ENCODE measurements at regions of chr21 and their contacts with region 1.

Region 1: DNA sequence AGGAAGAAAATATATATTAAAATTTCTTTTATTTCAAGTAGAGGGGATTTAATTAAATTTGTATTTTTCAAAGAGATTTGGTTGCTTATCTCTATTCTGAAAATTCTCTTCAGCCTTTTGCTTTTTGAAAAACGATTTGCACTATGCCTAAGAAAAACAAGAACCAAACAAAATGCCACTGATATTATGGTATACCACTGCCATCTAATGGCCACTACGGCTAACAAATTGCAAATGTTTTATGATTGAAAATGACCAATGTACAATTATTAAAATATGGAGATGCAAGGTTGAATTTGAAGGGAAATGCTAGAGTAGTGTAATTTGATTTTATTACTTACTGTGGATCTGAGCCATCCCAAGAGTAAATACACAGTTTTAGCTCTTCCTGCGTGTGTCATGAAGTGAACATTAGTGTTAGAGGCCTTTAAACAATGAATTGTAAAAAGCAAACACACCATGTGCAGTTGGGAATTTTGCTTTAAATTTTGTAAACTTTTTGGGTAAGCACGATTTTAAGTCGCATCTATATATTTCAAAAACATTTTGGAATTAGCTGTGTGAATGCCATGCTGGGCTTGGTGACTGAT is 137.4 kb upstream of the USP25 start:
- DNase-seq: peak; percentile 5
- H3K4me3 Mint-ChIP-seq: no peak overlapping the region
- H3K27ac Mint-ChIP-seq: no peak overlapping the region
- H3K4me1 Mint-ChIP-seq: no peaks in the 10 kb centered on the region
- H3K27me3 Mint-ChIP-seq: no peaks in the 10 kb centered on the region

Region 2: GRCh38 chr21:14259747-14260146 is 1332.6 kb before region 1 on chr21:
- CTCF ChIA-PET with region 1: no interaction called
- intact Hi-C with region 1: loop called (anchors 5 kb)
- DNase-seq: no peak
- H3K4me3 Mint-ChIP-seq: no peak overlapping the region
- H3K27ac Mint-ChIP-seq: no peak overlapping the region
- H3K4me1 Mint-ChIP-seq: peaks cover 8% of the 10 kb centered on the region
- H3K27me3 Mint-ChIP-seq: no peaks in the 10 kb centered on the region

Region 3: GRCh38 chr21:14403681-14404318 is 1188.6 kb before region 1 on chr21:
- CTCF ChIA-PET with region 1: no interaction called
- intact Hi-C with region 1: loop called (anchors 2 kb)
- DNase-seq: peak; percentile 9
- H3K4me3 Mint-ChIP-seq: no peak overlapping the region
- H3K27ac Mint-ChIP-seq: no peak overlapping the region
- H3K4me1 Mint-ChIP-seq: no peaks in the 10 kb centered on the region
- H3K27me3 Mint-ChIP-seq: no peaks in the 10 kb centered on the region

Region 4: DNA sequence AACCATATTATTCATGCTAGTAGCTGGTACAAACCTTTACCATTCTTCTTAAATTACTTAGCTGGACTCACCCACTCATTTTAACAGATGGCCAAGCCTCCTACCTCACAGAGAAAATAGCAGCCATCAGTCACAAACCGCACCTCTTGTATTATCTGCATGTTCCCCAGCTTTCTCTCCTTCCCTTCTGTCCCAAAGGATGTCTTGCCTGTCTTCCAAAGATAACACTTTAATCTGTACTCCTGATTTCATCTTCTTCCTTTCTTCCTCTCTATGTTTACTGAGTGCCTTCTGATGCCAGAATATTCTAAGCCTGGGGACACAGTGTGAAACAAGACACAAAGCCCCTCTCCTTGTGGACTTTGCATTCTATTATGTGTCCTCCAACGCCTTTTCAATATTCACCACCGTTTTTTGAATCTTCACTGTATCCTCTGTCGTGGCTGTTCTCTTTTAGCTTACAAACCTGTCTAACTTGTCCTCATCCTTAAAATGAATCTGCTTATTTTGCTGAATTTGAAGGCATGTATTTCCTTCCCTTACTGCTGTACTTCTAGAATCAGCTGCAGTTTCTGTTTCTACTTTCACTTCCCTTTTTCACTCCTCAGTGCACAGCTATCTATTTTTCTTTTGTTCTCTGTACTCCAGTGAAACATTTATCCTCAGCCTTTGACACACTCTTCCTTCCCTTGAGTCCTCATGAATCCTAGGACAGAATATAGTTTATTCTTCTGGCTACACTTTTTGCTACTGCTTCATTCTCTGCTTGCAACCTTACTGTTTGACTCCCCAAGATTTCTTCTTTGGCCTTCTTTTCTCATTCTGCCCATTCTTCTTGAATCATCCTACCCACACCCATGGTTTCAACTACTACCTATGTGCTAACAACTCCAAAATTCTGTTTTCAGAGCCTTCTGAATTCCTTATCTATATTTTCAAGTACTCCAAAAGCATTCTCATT is 829.4 kb before region 1 on chr21:
- CTCF ChIA-PET with region 1: no interaction called
- intact Hi-C with region 1: loop called (anchors 10 kb)
- DNase-seq: no peak
- H3K4me3 Mint-ChIP-seq: no peak overlapping the region
- H3K27ac Mint-ChIP-seq: no peak overlapping the region
- H3K4me1 Mint-ChIP-seq: no peaks in the 10 kb centered on the region
- H3K27me3 Mint-ChIP-seq: no peaks in the 10 kb centered on the region

Region 5: DNA sequence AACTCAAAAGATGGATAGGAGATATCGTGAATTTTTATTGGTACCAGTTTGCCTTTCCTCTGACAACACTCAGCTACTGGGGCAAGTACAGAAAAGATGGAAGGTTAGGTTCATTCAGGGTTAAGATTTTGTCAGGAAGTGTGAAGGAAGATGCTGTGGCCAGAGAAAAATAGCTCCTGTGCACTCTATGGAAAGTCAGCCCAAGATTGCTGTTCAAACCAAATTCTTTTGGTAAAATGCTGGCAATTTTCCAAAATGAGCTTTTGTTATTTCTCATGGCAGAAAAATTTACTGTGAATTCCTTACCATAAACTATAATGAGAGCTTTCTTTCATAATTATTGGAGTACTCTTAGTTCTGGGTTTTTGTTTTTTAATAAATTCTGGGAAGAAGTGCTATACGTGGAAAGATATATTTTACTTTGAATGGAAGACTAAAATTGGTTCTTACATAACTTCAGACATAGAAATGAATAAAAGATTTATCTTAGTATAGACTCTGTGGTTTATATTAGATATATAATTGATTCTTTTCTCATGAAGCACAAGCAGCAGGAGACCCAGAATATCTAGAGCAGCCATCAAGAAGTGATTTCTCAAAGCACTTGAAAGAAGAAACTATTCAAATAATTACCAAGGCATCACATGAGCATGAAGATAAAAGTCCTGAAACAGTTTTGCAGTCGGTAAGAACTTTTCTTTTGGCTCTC is 249.6 kb after region 1 on chr21:
- CTCF ChIA-PET with region 1: no interaction called
- intact Hi-C with region 1: no loop called
- DNase-seq: no peak
- H3K4me3 Mint-ChIP-seq: no peak overlapping the region
- H3K27ac Mint-ChIP-seq: no peak overlapping the region
- H3K4me1 Mint-ChIP-seq: peaks cover 5% of the 10 kb centered on the region
- H3K27me3 Mint-ChIP-seq: no peaks in the 10 kb centered on the region

Measured in activated naive CD4-positive, alpha-beta T cell treated with anti-CD3 and anti-CD28 coated beads for 36 hours (primary cell).